Heart right ventricle (tissue), 16 donors: ENCODE measurements at regions of chr14 and their contacts with region 1.

Region 1: DNA sequence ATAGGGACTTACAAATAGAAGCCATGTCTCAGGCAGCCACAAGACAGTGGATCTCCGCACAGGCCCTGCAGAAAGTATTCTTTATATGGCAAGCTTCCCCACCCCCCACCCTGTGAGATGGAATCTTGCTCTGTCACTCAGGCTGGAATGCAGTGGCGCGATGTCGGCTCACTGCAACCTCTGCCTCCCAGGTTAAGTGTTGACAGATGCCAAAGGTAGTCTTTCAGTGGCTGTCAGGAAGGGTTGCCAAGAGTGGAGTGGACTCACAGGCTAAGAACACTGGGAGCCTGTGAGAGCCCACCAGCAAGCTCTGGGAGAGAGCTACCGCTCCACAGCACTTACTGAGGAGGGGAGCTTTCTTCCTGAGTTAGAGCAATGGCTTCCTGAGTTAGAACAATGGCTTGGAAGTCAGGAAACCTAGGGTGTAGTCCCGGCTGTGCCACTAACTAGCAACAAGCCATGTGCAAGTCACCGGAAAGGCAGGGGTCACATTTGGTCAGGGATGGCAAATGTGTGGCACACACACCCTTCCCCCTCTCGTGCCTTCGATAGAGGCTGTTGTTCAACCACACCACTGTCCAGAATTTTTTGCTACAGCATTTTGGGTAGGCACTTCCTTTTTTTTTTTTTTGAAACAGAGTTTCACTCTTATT is 2.6 kb downstream of the RNASE1 start:
- DNase-seq: peak; percentile 44 to 59
- ATAC-seq: peak; percentile 62 to 77 (median 76)
- H3K4me3 ChIP-seq: peak overlapping the region; percentile 43 to 66 (median 60)
- H3K27ac ChIP-seq: peak overlapping the region; percentile 56 to 91 (median 83)
- H3K4me1 ChIP-seq: peaks cover 3 to 68% (median 28%) of the 10 kb centered on the region in 9 donors
- H3K27me3 ChIP-seq: no peaks in the 10 kb centered on the region
- CTCF ChIP-seq: no peak

Region 2: GRCh38 chr14:20707622-20708021 is 92.4 kb before region 1 on chr14:
- intact Hi-C with region 1: loop called in 1 of 10 experiments (anchors 10 kb)
- DNase-seq: no peak
- ATAC-seq: peak in 2 of 8 donors; percentile 46 to 52
- H3K4me3 ChIP-seq: no peak overlapping the region
- H3K27ac ChIP-seq: peak overlapping the region in 8 of 10 donors; percentile 25 to 77 (median 48)
- H3K4me1 ChIP-seq: peaks cover 0 to 13% (median 5%) of the 10 kb centered on the region in 9 donors
- H3K27me3 ChIP-seq: no peaks in the 10 kb centered on the region
- CTCF ChIP-seq: no peak